ENCODE measurements at regions of chr1 and their contacts with region 1.

Region 1: DNA sequence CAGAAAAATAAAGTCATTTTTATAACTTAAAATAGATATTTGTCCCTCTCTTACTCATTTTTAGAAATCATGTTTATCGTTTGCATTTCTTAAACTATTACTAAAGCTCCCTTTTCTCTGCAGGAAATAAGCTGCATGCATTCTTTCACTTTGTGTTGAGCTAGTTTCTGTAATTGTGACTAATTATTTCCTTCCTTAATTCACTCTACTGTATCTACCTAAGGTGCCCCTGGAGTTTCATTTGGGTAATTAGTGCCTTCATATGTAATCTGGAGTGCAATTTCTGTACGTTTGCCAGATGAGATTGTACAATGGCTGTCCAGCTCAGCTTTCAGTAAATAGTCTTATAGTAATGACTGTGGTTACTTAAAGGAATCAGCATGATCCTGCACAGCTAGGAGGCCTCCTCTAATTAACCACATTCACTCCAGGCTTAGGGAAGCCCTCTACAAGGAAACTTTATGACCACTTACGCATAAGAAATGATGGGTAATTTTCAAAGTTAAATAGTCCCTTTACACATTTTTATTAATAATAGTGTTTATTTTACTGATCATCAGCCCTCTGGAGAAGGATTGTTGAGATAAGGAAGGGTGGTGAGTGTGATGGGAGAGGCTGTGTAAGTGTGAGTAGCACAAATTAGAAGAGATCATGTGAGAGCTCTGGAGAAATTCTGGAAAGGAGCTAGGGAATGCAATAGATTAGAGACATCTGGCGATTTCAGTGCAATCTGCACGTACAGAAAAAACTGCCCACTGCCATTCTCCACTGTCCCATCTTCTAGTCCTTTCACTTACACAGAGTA is 86.8 kb downstream of the LRRC8C start:
- DNase-seq: peak; percentile 28
- H3K4me3 Mint-ChIP-seq: peak overlapping the region; percentile 26
- H3K27ac Mint-ChIP-seq: peak overlapping the region; percentile 95
- H3K4me1 Mint-ChIP-seq: peaks cover 86% of the 10 kb centered on the region
- H3K27me3 Mint-ChIP-seq: no peaks in the 10 kb centered on the region

Region 2: GRCh38 chr1:89065079-89065868 is 654.4 kb before region 1 on chr1 and contains the start of gene GBP1:
- CTCF ChIA-PET with region 1: no interaction called
- intact Hi-C with region 1: no loop called
- DNase-seq: no peak
- H3K4me3 Mint-ChIP-seq: peak within 1 kb of the TSS; percentile 75
- H3K27ac Mint-ChIP-seq: peak within 1 kb of the TSS; percentile 89
- H3K4me1 Mint-ChIP-seq: peaks cover 53% of the 10 kb centered on the region
- H3K27me3 Mint-ChIP-seq: no peaks in the 10 kb centered on the region
- total RNA-seq, gene GBP1: 48.2 to 52.8 TPM

Region 3: DNA sequence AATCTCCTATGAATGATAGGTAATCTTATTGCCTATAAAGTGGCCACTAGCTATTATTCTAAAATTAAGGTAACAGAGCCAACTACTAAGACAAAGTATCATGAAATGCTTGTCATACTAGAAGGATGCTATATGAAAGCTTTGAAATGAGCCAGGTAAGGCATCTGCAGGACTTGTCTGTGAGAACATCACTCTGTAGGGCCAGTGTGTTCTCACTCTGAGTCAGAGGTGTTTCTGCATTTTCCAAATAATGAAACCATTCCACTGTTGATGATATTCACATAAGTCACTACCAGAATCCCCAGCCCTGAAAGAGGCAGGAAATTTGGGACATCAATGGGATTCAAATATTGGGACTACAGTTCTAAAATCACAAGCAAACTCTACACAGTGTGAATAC is 421.2 kb before region 1 on chr1:
- CTCF ChIA-PET with region 1: no interaction called
- intact Hi-C with region 1: loop called (anchors 5 kb)
- DNase-seq: no peak
- H3K4me3 Mint-ChIP-seq: no peak overlapping the region
- H3K27ac Mint-ChIP-seq: no peak overlapping the region
- H3K4me1 Mint-ChIP-seq: peaks cover 55% of the 10 kb centered on the region
- H3K27me3 Mint-ChIP-seq: no peaks in the 10 kb centered on the region

Region 4: DNA sequence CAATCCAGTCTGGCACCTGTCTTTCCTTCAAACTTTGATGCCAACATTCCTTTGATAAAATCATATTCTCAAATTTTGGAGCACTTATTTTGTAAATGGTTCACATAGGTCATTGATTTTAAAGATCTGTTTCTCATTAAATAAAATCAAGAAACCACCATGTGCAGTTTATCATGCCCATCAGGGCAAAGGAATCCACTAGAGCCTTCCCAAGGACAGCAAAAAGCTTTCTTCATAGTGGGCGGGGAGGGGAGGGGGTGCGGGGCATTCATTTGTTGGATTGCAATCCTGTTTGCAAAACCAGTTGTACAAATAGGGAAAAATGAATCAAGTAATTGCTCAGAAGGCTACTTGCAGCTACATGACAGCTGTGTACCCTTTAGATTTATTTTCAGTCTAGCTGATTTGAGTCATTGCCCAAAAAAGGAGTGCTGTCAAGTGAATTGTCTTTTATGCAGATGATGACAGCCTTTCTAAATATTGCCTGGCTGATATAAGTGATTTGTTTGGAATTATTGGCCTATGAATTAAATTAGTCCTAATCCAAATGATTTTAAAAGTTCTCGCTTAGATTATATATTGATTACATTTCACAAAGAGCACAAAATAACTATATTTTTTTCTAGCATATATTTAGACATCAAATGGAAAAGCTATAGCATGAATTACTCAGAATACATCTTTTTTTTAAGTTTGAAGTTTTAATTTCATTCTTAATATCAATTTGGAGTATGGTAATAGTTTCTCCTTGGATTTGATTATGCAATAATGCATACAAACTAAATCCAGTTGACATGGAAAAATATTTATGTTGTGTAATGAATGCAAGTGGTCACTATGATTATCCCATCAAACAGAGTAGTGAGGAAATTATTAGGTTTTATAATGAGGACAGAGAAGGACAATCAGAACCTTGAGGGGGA is 171.9 kb before region 1 on chr1:
- CTCF ChIA-PET with region 1: interaction called, 3 read pairs
- intact Hi-C with region 1: loop called (anchors 1 kb)
- DNase-seq: peak; percentile 56
- H3K4me3 Mint-ChIP-seq: no peak overlapping the region
- H3K27ac Mint-ChIP-seq: peak overlapping the region; percentile 95
- H3K4me1 Mint-ChIP-seq: peaks cover 84% of the 10 kb centered on the region
- H3K27me3 Mint-ChIP-seq: no peaks in the 10 kb centered on the region

Region 5: DNA sequence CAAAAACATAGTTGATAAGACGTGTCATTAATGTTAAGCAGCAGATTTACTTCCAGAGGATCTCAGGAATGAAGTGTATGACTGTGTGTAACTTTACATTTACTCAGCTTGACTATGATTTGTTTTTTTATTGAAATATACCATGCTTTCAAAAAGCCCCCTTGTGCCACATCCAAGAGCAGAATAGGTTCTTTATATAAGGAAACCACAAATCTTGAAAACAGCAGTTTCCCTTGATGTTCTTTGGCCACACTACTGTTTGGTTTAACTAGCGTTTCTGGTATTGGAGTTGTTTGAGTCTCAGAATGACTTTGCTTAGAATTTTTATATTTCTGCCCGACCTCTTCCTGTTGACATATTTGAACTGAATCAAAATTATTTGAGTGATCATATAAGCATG is 61.8 kb before region 1 on chr1:
- CTCF ChIA-PET with region 1: interaction called, 4 read pairs
- intact Hi-C with region 1: loop called (anchors 1 kb)
- DNase-seq: peak; percentile 41
- H3K4me3 Mint-ChIP-seq: no peak overlapping the region
- H3K27ac Mint-ChIP-seq: peak overlapping the region; percentile 44
- H3K4me1 Mint-ChIP-seq: peaks cover 83% of the 10 kb centered on the region
- H3K27me3 Mint-ChIP-seq: no peaks in the 10 kb centered on the region

Region 6: DNA sequence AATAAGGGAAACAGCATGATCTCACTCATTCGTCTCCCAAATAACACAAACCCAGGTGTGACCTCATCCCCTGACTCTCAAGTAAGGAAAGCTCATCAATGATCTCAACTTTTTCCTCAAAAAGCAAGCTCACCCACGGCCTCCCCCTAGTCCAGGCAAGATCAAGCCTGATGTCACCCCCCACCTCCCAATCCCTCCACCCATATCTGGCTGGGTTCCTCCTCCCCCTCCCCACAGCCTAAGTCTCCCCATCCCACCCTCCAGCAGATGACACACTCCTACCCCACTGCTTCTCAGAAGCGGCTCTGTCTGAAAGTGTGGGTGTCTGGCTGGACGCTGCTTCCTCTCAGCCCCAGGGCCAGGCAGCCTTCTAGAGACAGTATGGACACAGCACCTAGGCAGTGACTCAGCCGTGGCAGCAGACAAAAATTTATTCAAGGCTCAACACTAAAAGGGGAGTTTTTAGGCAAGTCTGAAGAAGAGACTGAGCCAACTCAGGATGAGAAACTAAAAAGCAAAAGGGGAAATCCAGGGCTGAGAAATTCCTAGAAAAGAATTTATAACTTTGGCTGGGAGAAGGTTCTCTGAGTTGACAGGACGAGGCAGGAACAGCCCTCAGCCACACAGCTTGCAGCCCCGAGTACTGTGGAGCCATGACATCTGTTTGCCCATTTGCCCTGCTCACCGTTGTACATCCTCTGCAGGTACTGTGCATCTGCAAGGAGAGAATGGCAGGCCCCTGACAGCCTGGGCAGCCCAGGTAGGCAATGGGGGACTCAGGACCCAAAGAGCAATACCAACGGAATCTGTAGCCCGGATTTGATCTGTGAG is 19.5 kb after region 1 on chr1:
- CTCF ChIA-PET with region 1: no interaction called
- intact Hi-C with region 1: loop called (anchors 1 kb)
- DNase-seq: peak; percentile 65
- H3K4me3 Mint-ChIP-seq: no peak overlapping the region
- H3K27ac Mint-ChIP-seq: peak overlapping the region; percentile 55
- H3K4me1 Mint-ChIP-seq: peaks cover 20% of the 10 kb centered on the region
- H3K27me3 Mint-ChIP-seq: no peaks in the 10 kb centered on the region

Region 7: GRCh38 chr1:89780721-89781120 is 61.0 kb after region 1 on chr1:
- CTCF ChIA-PET with region 1: interaction called, 8 read pairs
- intact Hi-C with region 1: loop called (anchors 1 kb)
- DNase-seq: peak; percentile 57
- H3K4me3 Mint-ChIP-seq: peak overlapping the region; percentile 39
- H3K27ac Mint-ChIP-seq: peak overlapping the region; percentile 88
- H3K4me1 Mint-ChIP-seq: peaks cover 49% of the 10 kb centered on the region
- H3K27me3 Mint-ChIP-seq: no peaks in the 10 kb centered on the region

Measured in activated naive CD4-positive, alpha-beta T cell treated with anti-CD3 and anti-CD28 coated beads for 36 hours (primary cell).